ENCODE measurements at regions of chr10 and their contacts with region 1.

Region 1: DNA sequence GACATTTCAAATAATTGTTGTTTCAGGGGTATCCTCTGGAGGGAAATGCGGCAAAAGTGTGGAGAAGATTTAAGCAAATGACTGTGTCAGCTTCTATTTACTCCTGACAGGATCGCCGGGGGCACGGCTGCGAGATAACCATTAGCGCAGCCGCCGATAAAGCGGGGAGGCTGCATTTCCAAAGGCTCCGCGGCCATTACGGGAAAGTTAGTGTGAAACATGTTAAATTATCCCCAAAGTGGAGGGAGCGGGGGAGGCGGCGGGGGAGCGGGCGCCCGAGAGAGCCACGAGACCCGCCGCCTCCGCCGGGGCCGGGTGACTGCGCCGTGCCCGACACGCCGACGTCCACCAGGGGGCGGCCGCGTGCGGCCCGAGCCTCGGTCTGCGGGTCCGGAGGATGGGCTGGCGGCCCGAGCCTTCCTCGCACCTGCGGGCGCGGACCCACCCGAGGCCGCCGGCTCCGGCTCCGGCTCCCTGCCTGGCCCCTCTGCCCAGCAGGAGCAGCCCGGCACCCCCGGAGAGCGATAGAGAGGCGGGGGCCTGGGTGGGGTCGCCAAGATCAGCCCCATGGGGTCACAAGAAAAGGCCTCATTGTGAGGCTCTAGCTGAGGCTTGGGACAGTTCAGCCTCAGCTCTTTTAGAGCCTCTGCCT is 74.4 kb upstream of the PAX2 start:
- DNase-seq: no peak
- H3K4me3 ChIP-seq: peak overlapping the region in 3 of 4 donors; percentile 2 to 18 (median 16)
- H3K27ac ChIP-seq: no peak overlapping the region
- H3K4me1 ChIP-seq: peaks cover 0 to 11% (median 7%) of the 10 kb centered on the region in 4 donors
- H3K27me3 ChIP-seq: peaks cover 0 to 100% (median 40%) of the 10 kb centered on the region in 4 donors
- CTCF ChIP-seq: peak; percentile 51 to 73 (median 64)
- EP300 ChIP-seq: no peak
- POLR2A ChIP-seq: no peak

Region 2: DNA sequence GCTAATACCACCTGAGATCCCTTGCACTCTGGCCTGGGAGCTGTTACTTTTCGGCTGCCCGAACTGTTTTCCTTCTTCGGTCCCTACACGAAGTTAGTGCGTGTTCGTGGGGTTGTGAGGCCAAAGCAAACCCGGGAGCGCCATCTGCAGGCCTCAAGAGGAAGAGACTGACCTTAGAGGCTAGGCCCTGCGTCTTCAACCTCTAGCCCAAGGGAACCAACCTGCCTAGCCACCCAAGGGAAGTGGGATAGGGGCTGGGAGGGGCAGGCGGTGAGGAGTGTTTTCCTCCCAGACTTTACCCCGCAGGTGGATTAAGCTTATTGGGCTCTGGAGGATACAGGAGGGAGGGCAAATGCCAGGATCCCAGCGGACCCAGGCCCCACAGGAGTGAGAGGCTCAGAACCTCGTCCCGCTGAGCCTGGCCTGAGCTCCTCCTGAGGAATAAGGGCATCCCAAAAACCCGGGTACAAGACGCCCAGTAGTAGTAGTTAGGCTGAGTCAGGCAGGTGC is 72.7 kb after region 1 on chr10:
- intact Hi-C with region 1: loop called (anchors 5 kb)
- DNase-seq: no peak
- H3K4me3 ChIP-seq: peak overlapping the region in 1 of 4 donors; percentile 47
- H3K27ac ChIP-seq: no peak overlapping the region
- H3K4me1 ChIP-seq: peaks cover 46 to 94% (median 83%) of the 10 kb centered on the region in 4 donors
- H3K27me3 ChIP-seq: peaks cover 7 to 100% (median 91%) of the 10 kb centered on the region in 4 donors
- CTCF ChIP-seq: peak; percentile 36 to 53 (median 39)
- EP300 ChIP-seq: no peak
- POLR2A ChIP-seq: no peak

Measured in esophagus muscularis mucosa (tissue), 4 donors.